CD14-positive monocyte (primary cell): ENCODE measurements at regions of chr15 and their contacts with region 1.

Region 1: DNA sequence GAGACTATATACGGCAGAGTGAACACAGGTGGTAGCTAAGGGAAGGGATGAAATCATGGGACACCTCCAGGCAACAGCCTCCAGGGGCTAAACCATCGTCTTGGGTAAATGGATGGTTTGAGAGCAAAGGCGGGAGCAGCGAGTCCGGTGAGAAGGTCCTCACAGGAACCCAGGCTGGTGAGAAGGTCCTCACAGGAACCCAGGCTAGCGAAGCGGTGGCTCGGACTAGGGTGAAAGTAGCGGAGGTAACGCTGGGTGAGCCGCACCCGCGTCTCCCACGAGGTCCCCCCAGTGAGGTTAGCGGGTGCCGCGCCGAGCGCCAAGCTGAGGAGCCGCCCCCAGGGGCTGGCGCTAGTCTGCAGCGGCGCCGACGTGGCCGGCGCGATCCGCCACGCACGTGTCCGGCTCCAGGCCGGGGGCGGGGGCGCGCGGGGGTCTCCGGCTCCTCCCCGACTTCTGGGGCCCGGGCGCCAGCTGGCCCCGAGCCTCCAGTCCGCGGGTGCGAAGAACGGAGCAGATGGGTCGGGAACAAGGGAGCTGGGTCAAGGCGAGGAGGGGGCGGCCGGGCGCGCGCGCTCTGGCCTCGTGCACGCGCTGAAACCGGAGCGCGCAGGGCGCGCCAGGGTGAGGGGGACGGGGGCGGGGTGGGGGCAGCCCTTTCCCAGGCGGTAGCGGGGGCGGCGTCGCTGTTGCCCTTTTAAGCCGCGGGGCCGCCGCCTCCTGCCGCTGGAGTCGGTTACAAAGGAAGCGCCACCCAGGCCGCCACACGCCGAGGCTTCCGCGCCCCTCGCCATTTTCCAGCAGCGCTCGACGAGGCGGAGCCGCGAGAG is at the start of gene UBE2Q2:
- DNase-seq: peak; percentile 32 to 46 (median 39)
- H3K4me3 ChIP-seq: peak within 1 kb of the TSS; percentile 77 to 89 (median 88)
- H3K4me3 Mint-ChIP-seq: peak within 1 kb of the TSS; percentile 96
- H3K27ac ChIP-seq: peak within 1 kb of the TSS; percentile 52 to 89
- H3K27ac Mint-ChIP-seq: peak within 1 kb of the TSS; percentile 83 to 96 (median 93)
- H3K4me1 ChIP-seq: peaks cover 33 to 40% of the 10 kb centered on the region in 2 donors
- H3K4me1 Mint-ChIP-seq: peaks cover 41% of the 10 kb centered on the region
- H3K27me3 ChIP-seq: no peaks in the 10 kb centered on the region
- H3K27me3 Mint-ChIP-seq: peaks cover 0 to 4% (median 3%) of the 10 kb centered on the region in 3 donors
- CTCF ChIP-seq: no peak
- polyA plus RNA-seq, gene UBE2Q2: 13.6 to 22.1 (median 20.9) TPM

Region 2: DNA sequence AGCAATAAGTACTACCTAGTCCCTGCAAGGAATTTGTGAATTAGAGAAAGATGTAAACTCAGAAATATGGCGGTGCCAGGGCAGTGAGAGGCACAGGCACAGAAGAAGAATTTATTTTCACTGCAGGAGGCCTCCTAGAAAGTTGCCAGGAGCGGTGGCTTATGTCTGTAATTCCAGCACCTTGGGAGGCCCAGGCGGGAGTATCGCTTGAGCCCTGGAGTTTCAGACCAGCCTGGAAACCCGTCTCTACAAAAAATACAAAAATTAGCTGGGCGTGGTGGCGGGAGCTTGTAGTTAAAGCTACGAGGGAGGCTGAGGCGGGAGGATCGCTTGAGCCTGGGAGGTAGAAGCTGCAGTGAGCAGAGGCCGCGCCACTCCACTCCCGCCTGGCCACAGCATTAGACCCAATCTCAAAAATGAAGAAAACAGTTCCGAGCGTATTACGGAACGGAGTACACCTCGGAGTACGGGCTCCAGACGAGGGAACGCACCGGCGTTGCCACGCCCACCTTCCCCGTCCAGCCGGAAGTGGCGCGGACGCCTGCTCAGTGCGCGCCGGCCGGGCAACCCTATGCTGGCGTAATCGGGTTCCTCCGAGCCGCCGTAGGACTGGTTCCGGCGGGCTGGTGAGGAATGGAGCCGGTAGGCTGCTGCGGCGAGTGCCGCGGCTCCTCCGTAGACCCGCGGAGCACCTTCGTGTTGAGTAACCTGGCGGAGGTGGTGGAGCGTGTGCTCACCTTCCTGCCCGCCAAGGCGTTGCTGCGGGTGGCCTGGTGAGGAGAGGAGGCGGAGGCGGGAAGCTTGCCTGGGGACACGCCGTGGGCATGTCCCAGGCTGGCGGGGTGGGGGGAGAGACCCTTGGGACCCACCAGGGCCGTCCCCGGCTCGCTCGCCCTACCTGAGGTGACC is 60.6 kb after region 1 on chr15 and contains the start of gene FBXO22:
- intact Hi-C with region 1: loop called in 1 of 2 experiments (anchors 5 kb)
- DNase-seq: peak; percentile 84 to 90 (median 87)
- H3K4me3 ChIP-seq: peak within 1 kb of the TSS; percentile 84 to 99 (median 90)
- H3K4me3 Mint-ChIP-seq: peak within 1 kb of the TSS; percentile 97 to 100
- H3K27ac ChIP-seq: peak within 1 kb of the TSS; percentile 65 to 90
- H3K27ac Mint-ChIP-seq: peak within 1 kb of the TSS; percentile 86 to 97 (median 96)
- H3K4me1 ChIP-seq: peaks cover 6 to 20% of the 10 kb centered on the region in 2 donors
- H3K4me1 Mint-ChIP-seq: peaks cover 24% of the 10 kb centered on the region
- H3K27me3 ChIP-seq: no peaks in the 10 kb centered on the region
- H3K27me3 Mint-ChIP-seq: peaks cover 0 to 3% (median 2%) of the 10 kb centered on the region in 3 donors
- CTCF ChIP-seq: no peak
- polyA plus RNA-seq, gene FBXO22: 4.2 to 12.8 (median 12.3) TPM